Sigmoid colon (tissue), 7 donors: ENCODE measurements at regions of chr9 and their contacts with region 1.

Region 1: GRCh38 chr9:34500623-34501267 is 22.0 kb downstream of the ENHO start:
- DNase-seq: no peak
- H3K4me3 ChIP-seq: no peak overlapping the region
- H3K27ac ChIP-seq: no peak overlapping the region
- H3K4me1 ChIP-seq: peaks cover 0 to 29% (median 25%) of the 10 kb centered on the region in 4 donors
- H3K27me3 ChIP-seq: no peaks in the 10 kb centered on the region
- CTCF ChIP-seq: peak; percentile 73 to 98 (median 90)
- EP300 ChIP-seq: no peak
- POLR2A ChIP-seq: no peak

Region 2: DNA sequence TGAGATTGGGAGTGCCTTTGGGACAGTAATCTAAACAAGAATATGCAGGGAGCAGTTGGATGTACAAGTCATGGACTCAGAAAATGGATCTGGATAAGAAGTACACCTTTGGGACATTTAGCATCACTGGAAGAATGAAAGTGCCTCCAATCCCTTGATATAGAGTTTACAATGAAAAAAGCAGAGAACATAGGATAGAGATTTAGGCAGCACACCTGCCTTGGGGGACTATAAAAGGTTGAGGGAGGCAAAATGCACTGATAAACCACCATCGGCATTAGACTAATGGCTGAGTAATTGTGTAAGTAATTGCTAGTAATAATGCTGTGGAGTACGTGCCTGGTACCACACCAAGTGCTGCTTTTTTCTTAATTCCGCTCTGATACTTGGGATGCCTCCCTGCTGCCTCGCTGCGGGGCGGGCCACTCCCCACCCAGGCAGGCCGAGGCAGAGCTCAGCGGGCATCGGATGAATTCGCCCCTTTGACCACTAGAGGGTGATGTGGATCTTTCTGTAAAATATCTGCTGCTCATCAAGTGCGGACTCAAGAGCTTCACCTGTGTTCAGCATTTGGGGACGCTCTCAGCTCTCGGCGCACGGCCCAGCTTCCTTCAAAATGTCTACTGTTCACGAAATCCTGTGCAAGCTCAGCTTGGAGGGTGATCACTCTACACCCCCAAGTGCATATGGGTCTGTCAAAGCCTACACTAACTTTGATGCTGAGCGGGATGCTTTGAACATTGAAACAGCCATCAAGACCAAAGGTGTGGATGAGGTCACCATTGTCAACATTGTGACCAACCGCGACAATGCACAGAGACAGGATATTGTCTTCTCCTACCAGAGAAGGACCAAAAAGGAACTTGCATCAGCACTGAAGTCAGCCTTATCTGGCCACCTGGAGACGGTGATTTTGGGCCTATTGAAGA is 876.8 kb before region 1 on chr9:
- intact Hi-C with region 1: no loop called
- DNase-seq: no peak
- H3K4me3 ChIP-seq: no peak overlapping the region
- H3K27ac ChIP-seq: no peak overlapping the region
- H3K4me1 ChIP-seq: peaks cover 0 to 17% (median 8%) of the 10 kb centered on the region in 4 donors
- H3K27me3 ChIP-seq: no peaks in the 10 kb centered on the region
- CTCF ChIP-seq: peak; percentile 59 to 91 (median 88)
- EP300 ChIP-seq: no peak
- POLR2A ChIP-seq: no peak

Region 3: DNA sequence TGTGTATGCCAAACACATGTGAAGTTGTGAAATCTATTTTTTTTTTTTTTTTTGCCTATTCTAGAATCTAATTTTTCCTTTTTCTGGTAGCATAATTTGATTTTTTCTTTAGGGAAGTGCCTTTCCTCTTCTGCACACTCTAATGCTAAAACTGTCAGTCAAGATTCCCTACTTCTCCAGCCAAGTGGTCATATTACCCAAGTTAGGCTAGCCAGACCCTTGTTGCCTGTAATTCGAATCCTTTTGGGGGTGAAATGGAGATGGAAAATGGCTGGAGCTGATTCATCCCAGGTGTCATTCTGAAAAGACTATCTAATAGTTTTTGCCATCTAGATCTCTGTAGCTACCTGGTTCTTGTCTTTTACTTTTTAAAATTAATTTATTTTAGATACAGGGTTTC is 346.7 kb before region 1 on chr9:
- intact Hi-C with region 1: no loop called
- DNase-seq: peak; percentile 1
- H3K4me3 ChIP-seq: no peak overlapping the region
- H3K27ac ChIP-seq: no peak overlapping the region
- H3K4me1 ChIP-seq: no peaks in the 10 kb centered on the region
- H3K27me3 ChIP-seq: no peaks in the 10 kb centered on the region
- CTCF ChIP-seq: no peak
- EP300 ChIP-seq: no peak
- POLR2A ChIP-seq: no peak

Region 4: GRCh38 chr9:34403554-34404380 is 97.0 kb before region 1 on chr9:
- intact Hi-C with region 1: loop called (anchors 2 kb)
- DNase-seq: peak; percentile 84
- H3K4me3 ChIP-seq: no peak overlapping the region
- H3K27ac ChIP-seq: no peak overlapping the region
- H3K4me1 ChIP-seq: peaks cover 0 to 3% (median 0%) of the 10 kb centered on the region in 4 donors
- H3K27me3 ChIP-seq: no peaks in the 10 kb centered on the region
- CTCF ChIP-seq: peak; percentile 86 to 97 (median 95)
- EP300 ChIP-seq: no peak
- POLR2A ChIP-seq: no peak

Region 5: GRCh38 chr9:34437006-34437925 is 63.5 kb before region 1 on chr9:
- intact Hi-C with region 1: loop called (anchors 2 kb)
- DNase-seq: peak; percentile 70
- H3K4me3 ChIP-seq: no peak overlapping the region
- H3K27ac ChIP-seq: no peak overlapping the region
- H3K4me1 ChIP-seq: peaks cover 0 to 8% (median 0%) of the 10 kb centered on the region in 4 donors
- H3K27me3 ChIP-seq: no peaks in the 10 kb centered on the region
- CTCF ChIP-seq: peak; percentile 10 to 75 (median 64)
- EP300 ChIP-seq: no peak
- POLR2A ChIP-seq: no peak

Region 6: DNA sequence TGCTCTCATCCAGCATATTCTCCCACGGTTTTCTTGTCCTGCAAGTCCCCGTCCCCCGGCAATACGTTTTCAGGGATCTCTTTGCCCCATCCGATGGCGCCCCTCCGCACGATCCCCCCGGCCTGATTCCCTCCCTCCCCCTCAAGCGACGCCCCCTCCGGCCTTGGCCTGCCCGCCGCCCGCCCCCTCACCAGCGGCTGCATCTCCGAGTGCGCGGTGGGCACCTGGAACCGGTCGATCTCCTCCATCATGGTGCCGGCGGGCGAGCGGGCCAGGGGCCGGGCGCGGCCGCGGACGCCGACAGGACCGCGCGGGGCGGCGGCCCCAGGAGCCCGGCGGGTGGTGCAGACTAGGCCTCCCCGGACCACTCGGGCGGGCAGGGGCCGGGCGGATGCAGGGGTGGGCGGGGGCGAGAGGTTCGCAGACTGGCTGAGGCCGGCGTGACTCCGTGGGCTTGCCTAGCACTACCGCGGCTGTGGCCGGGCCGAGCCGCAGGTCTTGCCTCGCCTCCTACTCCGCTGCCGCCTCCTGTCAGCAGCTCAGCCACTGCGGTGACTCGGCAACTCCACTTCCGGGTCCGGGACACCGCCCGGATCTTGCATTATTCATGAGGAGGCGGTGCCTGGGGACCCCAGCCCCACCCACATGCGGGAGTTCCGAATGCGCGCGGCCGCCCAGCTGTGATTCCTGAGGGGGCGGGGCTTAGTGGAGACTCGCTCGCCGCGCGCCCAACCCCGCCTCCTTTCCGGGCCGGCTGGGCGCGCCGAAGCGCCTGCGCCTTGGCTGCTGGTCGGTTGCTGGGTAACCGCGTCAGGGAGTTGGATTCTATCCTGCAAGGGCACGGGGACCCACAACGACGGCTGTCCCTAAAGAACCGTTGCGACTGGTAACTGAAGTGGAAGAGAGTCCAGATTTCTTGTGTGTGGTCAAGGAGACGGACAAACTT is 42.5 kb before region 1 on chr9 and contains the starts of genes DNAI1 and FAM219A:
- intact Hi-C with region 1: loop called (anchors 5 kb)
- DNase-seq: peak; percentile 99
- H3K4me3 ChIP-seq: peak within 1 kb of the TSS; percentile 59 to 96 (median 70)
- H3K27ac ChIP-seq: peak within 1 kb of the TSS; percentile 82 to 88 (median 84)
- H3K4me1 ChIP-seq: peaks cover 0 to 36% (median 22%) of the 10 kb centered on the region in 4 donors
- H3K27me3 ChIP-seq: no peaks in the 10 kb centered on the region
- CTCF ChIP-seq: no peak
- EP300 ChIP-seq: no peak
- POLR2A ChIP-seq: peak; percentile 55 to 79
- total RNA-seq, gene DNAI1: under 0.01 TPM in 1 of 4 donors, not detected in the others
- total RNA-seq, gene FAM219A: 7.4 to 10.2 (median 8.8) TPM

Region 7: DNA sequence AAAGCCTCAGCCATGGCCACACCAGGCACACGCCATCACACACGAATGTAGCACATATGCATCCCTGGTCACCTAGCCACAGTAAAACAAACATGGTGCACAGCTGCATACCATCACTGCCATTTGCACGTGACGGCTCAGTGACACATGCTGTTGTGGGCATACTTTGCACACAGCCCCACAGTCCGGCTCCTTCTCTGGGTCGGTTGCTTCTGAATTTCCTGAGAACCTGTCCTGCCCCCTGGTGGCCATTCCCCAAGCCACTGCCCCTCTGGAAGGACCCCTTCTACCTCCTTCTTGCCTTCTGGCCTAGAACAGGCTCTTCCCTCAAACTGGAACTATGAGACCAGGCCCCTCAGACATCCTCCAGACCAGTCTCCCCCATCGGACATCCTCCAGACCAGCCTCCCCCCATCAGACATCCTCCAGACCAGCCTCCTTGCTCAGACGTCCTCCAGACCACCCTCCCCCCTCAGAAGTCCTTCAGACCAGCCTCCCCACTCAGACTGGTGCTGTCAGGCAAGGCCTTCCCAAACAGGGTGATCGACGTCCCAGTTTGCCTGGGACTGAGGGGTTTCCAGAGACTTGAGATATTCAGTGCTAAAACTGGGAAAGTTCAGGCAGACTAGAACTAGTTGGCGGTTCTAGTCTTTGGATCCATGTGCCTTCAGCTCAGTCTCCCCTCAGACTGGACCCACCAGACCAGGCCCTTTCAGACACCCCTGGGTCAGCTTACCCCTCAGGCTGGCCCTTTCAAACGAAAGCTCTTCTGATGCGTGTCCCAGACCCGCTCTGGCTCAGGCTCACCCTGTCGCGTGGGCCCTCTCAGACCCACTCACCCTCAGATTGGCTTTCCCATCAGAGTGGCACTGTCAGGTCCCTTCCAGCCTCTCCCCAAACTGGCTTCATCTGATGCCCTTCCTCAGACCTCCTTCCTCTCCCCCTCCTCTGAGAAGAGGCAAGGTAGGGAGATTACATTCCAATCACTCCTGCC is 46.4 kb after region 1 on chr9:
- intact Hi-C with region 1: loop called (anchors 2 kb)
- DNase-seq: peak; percentile 78
- H3K4me3 ChIP-seq: no peak overlapping the region
- H3K27ac ChIP-seq: no peak overlapping the region
- H3K4me1 ChIP-seq: peaks cover 0 to 14% (median 6%) of the 10 kb centered on the region in 4 donors
- H3K27me3 ChIP-seq: no peaks in the 10 kb centered on the region
- CTCF ChIP-seq: peak; percentile 24 to 75 (median 68)
- EP300 ChIP-seq: no peak
- POLR2A ChIP-seq: no peak

Region 8: DNA sequence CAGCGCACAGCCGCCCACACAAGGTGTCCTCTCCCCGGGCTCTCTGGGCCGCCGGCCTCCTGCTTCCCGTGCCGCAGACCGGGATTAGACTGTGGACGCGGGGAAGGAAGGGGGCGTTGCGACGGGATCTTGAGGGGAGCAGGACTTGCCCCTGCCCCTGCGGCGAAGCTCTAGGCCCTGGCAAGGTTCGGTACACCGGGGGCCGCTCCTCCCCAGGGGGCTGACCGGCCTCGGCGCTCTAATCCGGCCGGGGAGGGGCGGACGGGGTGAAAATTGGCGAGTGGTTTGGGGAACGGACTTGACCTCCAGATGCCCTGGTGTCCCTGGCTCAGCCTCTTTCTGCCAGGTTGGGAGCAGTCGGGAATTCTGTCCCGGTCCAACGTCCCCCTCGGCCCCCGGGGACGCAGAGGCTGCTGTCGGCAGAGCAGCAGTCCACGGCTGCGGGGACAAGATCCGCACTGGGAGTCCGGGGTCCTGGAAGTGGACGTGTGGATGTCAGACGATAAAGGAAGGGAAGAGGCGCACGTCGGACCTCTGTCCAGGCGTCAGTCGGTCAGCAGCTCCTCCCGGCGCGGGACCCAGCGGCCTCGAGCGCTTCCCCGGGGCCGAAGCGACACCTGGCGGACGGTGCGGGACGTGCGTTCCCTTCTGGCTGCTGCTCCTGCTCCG is 90.6 kb after region 1 on chr9:
- intact Hi-C with region 1: loop called (anchors 2 kb)
- DNase-seq: peak; percentile 93
- H3K4me3 ChIP-seq: peak overlapping the region in 3 of 4 donors; percentile 22 to 27 (median 24)
- H3K27ac ChIP-seq: peak overlapping the region in 2 of 4 donors; percentile 25 to 56
- H3K4me1 ChIP-seq: peaks cover 0 to 54% (median 44%) of the 10 kb centered on the region in 4 donors
- H3K27me3 ChIP-seq: peaks cover 13 to 67% (median 40%) of the 10 kb centered on the region in 3 donors
- CTCF ChIP-seq: peak; percentile 84 to 90 (median 88)
- EP300 ChIP-seq: no peak
- POLR2A ChIP-seq: no peak

Region 9: GRCh38 chr9:34796924-34797323 is 296.2 kb after region 1 on chr9:
- intact Hi-C with region 1: no loop called
- DNase-seq: no peak
- H3K4me3 ChIP-seq: no peak overlapping the region
- H3K27ac ChIP-seq: no peak overlapping the region
- H3K4me1 ChIP-seq: no peaks in the 10 kb centered on the region
- H3K27me3 ChIP-seq: peaks cover 0 to 6% (median 0%) of the 10 kb centered on the region in 3 donors
- CTCF ChIP-seq: no peak
- EP300 ChIP-seq: no peak
- POLR2A ChIP-seq: no peak